T-cell (primary cell): ENCODE measurements at regions of chr12 and their contacts with region 1.

Region 1: DNA sequence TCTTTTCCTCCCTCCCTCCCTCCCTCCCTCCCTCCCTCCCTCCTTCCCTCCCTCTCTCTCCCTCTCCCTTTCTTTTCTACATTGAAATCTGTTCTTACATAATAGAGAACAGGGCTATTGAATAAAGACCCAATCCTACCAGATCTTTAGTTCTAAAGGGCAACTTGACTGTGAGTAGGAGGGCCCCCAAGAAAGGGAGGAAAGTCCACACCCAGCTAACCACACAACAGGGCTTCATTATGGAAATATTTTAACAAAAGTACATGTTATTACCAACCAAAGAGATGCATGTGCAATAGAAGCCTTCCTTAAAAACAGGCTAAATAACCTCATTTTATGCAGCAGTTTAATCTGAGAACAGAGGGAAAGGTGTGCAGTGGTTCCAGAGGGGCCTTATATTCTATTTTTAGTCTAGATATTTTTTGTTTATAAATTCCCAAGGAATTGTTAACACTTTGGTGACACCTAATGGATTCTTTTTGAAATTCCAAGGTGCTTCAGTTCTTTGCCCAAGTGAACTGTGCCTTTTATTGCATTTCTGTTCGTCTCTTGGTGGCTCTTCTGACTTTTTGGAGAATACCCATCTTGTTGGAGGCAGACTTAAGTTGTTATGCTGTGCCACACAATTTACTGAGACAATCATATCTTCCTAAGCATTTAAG is 63.0 kb downstream of the GNS start:
- DNase-seq: peak in 1 of 35 experiments; percentile 50
- ATAC-seq: no peak
- H3K4me3 ChIP-seq: no peak overlapping the region
- H3K4me3 Mint-ChIP-seq: peak overlapping the region in 1 of 3 donors; percentile 46
- H3K27ac ChIP-seq: peak overlapping the region; percentile 43
- H3K27ac Mint-ChIP-seq: peak overlapping the region; percentile 84 to 92
- H3K4me1 ChIP-seq: peaks cover 39 to 66% of the 10 kb centered on the region in 2 experiments
- H3K4me1 Mint-ChIP-seq: peaks cover 80 to 86% (median 84%) of the 10 kb centered on the region in 3 donors
- H3K27me3 ChIP-seq: no peaks in the 10 kb centered on the region
- H3K27me3 Mint-ChIP-seq: no peaks in the 10 kb centered on the region

Region 2: GRCh38 chr12:64459394-64459891 is 236.8 kb before region 1 on chr12:
- CTCF ChIA-PET with region 1: no interaction called
- POLR2A ChIA-PET with region 1: interaction called, 8 to 15 read pairs
- DNase-seq: peak in 9 of 35 experiments; percentile 3 to 54 (median 10)
- ATAC-seq: peak; percentile 46 to 63 (median 56)
- H3K4me3 ChIP-seq: peak overlapping the region in 1 of 2 donors; percentile 52
- H3K4me3 Mint-ChIP-seq: peak overlapping the region; percentile 78 to 85 (median 79)
- H3K27ac ChIP-seq: peak overlapping the region; percentile 87
- H3K27ac Mint-ChIP-seq: peak overlapping the region; percentile 95 to 98
- H3K4me1 ChIP-seq: peaks cover 3 to 16% of the 10 kb centered on the region in 2 experiments
- H3K4me1 Mint-ChIP-seq: peaks cover 34 to 46% (median 44%) of the 10 kb centered on the region in 3 donors
- H3K27me3 ChIP-seq: no peaks in the 10 kb centered on the region
- H3K27me3 Mint-ChIP-seq: no peaks in the 10 kb centered on the region

Region 3: DNA sequence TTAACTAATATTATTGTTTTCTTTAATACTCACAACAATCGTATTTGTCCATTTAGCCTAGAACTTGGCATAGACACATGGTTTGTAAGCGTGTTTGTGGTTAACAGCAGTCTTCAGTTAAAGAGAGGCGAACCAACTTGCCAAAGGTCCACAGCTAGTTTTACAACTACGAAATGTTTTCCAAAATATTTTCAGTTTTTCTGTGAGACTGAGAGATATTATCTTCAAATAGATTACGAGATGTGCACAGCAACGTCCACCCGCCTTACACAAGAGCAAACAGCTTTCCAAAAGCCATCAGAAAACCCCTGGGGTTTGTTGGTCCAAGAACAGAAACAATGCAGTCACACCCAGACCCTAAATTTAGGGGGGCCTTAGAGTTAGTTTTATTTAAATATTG is 144.5 kb before region 1 on chr12:
- CTCF ChIA-PET with region 1: interaction called, 43 to 110 read pairs
- POLR2A ChIA-PET with region 1: interaction called in 1 of 2 experiments, 3 read pairs
- DNase-seq: no peak
- ATAC-seq: no peak
- H3K4me3 ChIP-seq: no peak overlapping the region
- H3K4me3 Mint-ChIP-seq: no peak overlapping the region
- H3K27ac ChIP-seq: no peak overlapping the region
- H3K27ac Mint-ChIP-seq: no peak overlapping the region
- H3K4me1 ChIP-seq: peaks cover 3 to 4% of the 10 kb centered on the region in 2 experiments
- H3K4me1 Mint-ChIP-seq: peaks cover 7 to 13% (median 10%) of the 10 kb centered on the region in 3 donors
- H3K27me3 ChIP-seq: peaks cover 0 to 4% of the 10 kb centered on the region in 2 experiments
- H3K27me3 Mint-ChIP-seq: peaks cover 0 to 2% of the 10 kb centered on the region in 2 donors

Region 4: DNA sequence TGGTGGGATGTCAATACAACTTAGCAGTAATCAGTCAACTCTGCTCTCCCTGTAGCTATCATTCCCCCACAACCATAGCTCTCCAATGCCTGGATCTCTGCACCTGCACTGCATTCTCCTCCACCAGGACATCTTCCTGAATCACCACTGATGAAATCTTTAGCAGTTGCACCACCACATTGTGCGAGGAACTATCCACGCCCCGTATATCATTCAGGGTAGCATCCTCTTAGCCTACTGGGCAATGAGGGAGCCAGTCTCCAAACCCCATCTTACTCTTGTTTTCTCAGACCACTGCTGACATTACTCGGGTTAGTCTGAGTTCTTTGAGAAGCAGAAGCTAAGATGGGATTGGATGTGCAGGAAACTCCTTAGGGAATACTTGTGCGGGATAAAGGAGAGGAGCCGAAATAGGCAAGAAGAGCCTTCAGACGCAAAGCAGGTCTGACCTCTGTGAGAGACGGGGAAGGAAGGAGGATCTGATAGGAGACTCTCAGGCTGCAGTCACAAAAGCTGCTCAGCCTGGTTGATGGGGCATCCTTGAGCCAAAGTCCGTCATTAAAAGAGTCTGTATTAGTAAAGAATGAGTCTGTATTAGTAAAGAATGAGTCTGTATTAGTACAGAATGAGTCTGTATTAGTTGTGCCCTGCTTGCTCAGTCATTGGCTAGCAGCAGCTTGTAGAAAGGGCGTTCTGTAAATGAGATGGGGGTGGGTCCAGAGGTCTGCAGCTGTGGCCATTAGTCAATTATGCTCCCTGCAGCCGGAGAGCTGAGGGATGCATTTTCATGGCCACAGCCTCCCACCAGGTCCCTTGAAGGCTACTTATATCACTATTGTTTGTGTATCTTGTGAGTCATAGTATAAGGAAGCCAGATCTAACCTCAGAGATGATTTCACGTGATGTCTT is 135.6 kb before region 1 on chr12:
- CTCF ChIA-PET with region 1: interaction called, 4 to 11 read pairs
- POLR2A ChIA-PET with region 1: no interaction called
- DNase-seq: no peak
- ATAC-seq: peak in 1 of 4 experiments; percentile 27
- H3K4me3 ChIP-seq: no peak overlapping the region
- H3K4me3 Mint-ChIP-seq: no peak overlapping the region
- H3K27ac ChIP-seq: no peak overlapping the region
- H3K27ac Mint-ChIP-seq: no peak overlapping the region
- H3K4me1 ChIP-seq: no peaks in the 10 kb centered on the region
- H3K4me1 Mint-ChIP-seq: peaks cover 0 to 10% (median 6%) of the 10 kb centered on the region in 3 donors
- H3K27me3 ChIP-seq: peaks cover 0 to 2% of the 10 kb centered on the region in 2 experiments
- H3K27me3 Mint-ChIP-seq: no peaks in the 10 kb centered on the region

Region 5: DNA sequence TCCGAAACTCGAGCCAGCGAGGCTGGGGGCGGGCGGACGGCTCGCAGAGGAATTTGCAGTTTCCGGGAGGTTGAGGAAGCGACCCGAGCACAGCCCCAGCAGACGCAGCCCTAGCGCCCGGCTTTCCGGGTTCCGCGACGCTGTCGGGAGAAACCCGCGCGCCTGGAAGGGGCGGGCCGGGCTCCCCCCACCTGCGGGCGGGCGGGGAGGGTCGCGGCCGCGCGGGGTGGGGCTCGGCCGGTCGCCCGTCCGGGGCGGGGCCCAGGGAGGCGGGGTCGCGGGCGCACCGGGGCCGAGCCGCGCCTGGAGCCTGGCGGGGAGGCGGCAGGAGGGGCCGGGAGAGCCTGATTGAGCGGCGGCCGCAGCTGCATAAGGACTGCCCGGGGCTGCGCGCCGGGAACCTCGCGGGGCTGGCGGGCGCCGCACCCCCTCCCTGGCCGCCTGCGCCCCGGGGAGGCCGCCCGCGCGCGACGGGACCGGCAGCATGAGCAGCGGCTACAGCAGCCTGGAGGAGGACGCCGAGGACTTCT is 86.0 kb before region 1 on chr12 and contains the start of gene RASSF3:
- CTCF ChIA-PET with region 1: interaction called, 3 to 24 read pairs
- POLR2A ChIA-PET with region 1: interaction called in 1 of 2 experiments, 4 read pairs
- DNase-seq: peak; percentile 43 to 87 (median 62)
- ATAC-seq: peak; percentile 66 to 73 (median 70)
- H3K4me3 ChIP-seq: peak within 1 kb of the TSS; percentile 84 to 92
- H3K4me3 Mint-ChIP-seq: peak within 1 kb of the TSS; percentile 93 to 99 (median 97)
- H3K27ac ChIP-seq: peak within 1 kb of the TSS; percentile 78
- H3K27ac Mint-ChIP-seq: peak within 1 kb of the TSS; percentile 96 to 99
- H3K4me1 ChIP-seq: peaks cover 19 to 34% of the 10 kb centered on the region in 2 experiments
- H3K4me1 Mint-ChIP-seq: peaks cover 38 to 51% (median 50%) of the 10 kb centered on the region in 3 donors
- H3K27me3 ChIP-seq: no peaks in the 10 kb centered on the region
- H3K27me3 Mint-ChIP-seq: no peaks in the 10 kb centered on the region
- total RNA-seq, gene RASSF3: 113 to 167 (median 149) TPM

Region 6: DNA sequence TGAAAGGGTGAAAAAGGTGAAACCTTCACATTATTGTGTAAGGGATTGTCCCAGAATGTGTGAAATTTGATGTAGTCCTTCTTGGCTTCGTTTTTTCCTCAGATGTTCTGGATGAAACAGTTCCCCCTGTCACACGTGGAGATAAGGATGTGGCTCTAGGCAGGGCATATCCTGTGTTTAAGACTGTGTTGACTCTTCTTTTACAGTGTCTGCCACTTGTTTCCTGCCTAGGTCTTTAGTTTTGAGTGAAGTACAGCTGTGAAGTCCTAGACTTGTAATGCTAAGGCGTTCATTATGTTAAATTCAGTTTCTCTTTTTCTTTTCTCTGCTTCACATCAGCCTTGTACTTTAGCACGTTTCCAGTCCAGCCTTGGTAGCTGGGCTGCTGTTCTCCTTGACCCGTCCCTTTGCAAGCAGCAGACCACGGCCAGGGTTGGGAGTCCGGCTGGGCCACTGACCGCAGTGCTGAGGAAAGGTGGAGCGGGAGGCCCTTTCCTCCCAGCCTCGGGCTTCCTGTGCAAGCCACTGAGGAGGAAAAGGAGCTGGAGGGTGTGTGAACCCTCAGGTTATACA is 26.9 kb before region 1 on chr12:
- CTCF ChIA-PET with region 1: interaction called, 4 to 34 read pairs
- POLR2A ChIA-PET with region 1: interaction called, 6 to 10 read pairs
- DNase-seq: peak in 30 of 35 experiments; percentile 23 to 88 (median 52)
- ATAC-seq: peak; percentile 87 to 90 (median 88)
- H3K4me3 ChIP-seq: peak overlapping the region; percentile 56 to 75
- H3K4me3 Mint-ChIP-seq: peak overlapping the region; percentile 76 to 90 (median 82)
- H3K27ac ChIP-seq: peak overlapping the region; percentile 91
- H3K27ac Mint-ChIP-seq: peak overlapping the region; percentile 97 to 99
- H3K4me1 ChIP-seq: peaks cover 91 to 93% of the 10 kb centered on the region in 2 experiments
- H3K4me1 Mint-ChIP-seq: peaks cover 94 to 97% (median 95%) of the 10 kb centered on the region in 3 donors
- H3K27me3 ChIP-seq: no peaks in the 10 kb centered on the region
- H3K27me3 Mint-ChIP-seq: no peaks in the 10 kb centered on the region

Region 7: GRCh38 chr12:64679487-64679983 is 16.7 kb before region 1 on chr12:
- CTCF ChIA-PET with region 1: interaction called, 3 to 11 read pairs
- POLR2A ChIA-PET with region 1: interaction called, 4 read pairs
- DNase-seq: peak in 34 of 35 experiments; percentile 62 to 86 (median 76)
- ATAC-seq: peak; percentile 63 to 71 (median 68)
- H3K4me3 ChIP-seq: peak overlapping the region in 1 of 2 donors; percentile 10
- H3K4me3 Mint-ChIP-seq: peak overlapping the region; percentile 64 to 68 (median 67)
- H3K27ac ChIP-seq: peak overlapping the region; percentile 93
- H3K27ac Mint-ChIP-seq: peak overlapping the region; percentile 98 to 99
- H3K4me1 ChIP-seq: peaks cover 87 to 98% of the 10 kb centered on the region in 2 experiments
- H3K4me1 Mint-ChIP-seq: peaks cover 91 to 98% (median 97%) of the 10 kb centered on the region in 3 donors
- H3K27me3 ChIP-seq: no peaks in the 10 kb centered on the region
- H3K27me3 Mint-ChIP-seq: no peaks in the 10 kb centered on the region

Region 8: GRCh38 chr12:64946132-64946829 is 250.1 kb after region 1 on chr12:
- CTCF ChIA-PET with region 1: no interaction called
- POLR2A ChIA-PET with region 1: no interaction called
- DNase-seq: no peak
- ATAC-seq: no peak
- H3K4me3 ChIP-seq: no peak overlapping the region
- H3K4me3 Mint-ChIP-seq: no peak overlapping the region
- H3K27ac ChIP-seq: no peak overlapping the region
- H3K27ac Mint-ChIP-seq: no peak overlapping the region
- H3K4me1 ChIP-seq: no peaks in the 10 kb centered on the region
- H3K4me1 Mint-ChIP-seq: no peaks in the 10 kb centered on the region
- H3K27me3 ChIP-seq: peaks cover 0 to 6% of the 10 kb centered on the region in 2 experiments
- H3K27me3 Mint-ChIP-seq: peaks cover 4 to 23% of the 10 kb centered on the region in 2 donors

Region 9: GRCh38 chr12:65004270-65004669 is 308.1 kb after region 1 on chr12:
- CTCF ChIA-PET with region 1: no interaction called
- POLR2A ChIA-PET with region 1: no interaction called
- DNase-seq: no peak
- ATAC-seq: no peak
- H3K4me3 ChIP-seq: no peak overlapping the region
- H3K4me3 Mint-ChIP-seq: no peak overlapping the region
- H3K27ac ChIP-seq: no peak overlapping the region
- H3K27ac Mint-ChIP-seq: no peak overlapping the region
- H3K4me1 ChIP-seq: no peaks in the 10 kb centered on the region
- H3K4me1 Mint-ChIP-seq: no peaks in the 10 kb centered on the region
- H3K27me3 ChIP-seq: peaks cover 0 to 5% of the 10 kb centered on the region in 2 experiments
- H3K27me3 Mint-ChIP-seq: peaks cover 11 to 18% of the 10 kb centered on the region in 2 donors

Region 10: GRCh38 chr12:65449400-65449799 is 753.2 kb after region 1 on chr12:
- CTCF ChIA-PET with region 1: no interaction called
- POLR2A ChIA-PET with region 1: no interaction called
- DNase-seq: no peak
- ATAC-seq: no peak
- H3K4me3 ChIP-seq: no peak overlapping the region
- H3K4me3 Mint-ChIP-seq: no peak overlapping the region
- H3K27ac ChIP-seq: no peak overlapping the region
- H3K27ac Mint-ChIP-seq: no peak overlapping the region
- H3K4me1 ChIP-seq: no peaks in the 10 kb centered on the region
- H3K4me1 Mint-ChIP-seq: no peaks in the 10 kb centered on the region
- H3K27me3 ChIP-seq: no peaks in the 10 kb centered on the region
- H3K27me3 Mint-ChIP-seq: peaks cover 2 to 10% of the 10 kb centered on the region in 2 donors